ENCODE measurements at regions of chr1 and their contacts with region 1.

Region 1: DNA sequence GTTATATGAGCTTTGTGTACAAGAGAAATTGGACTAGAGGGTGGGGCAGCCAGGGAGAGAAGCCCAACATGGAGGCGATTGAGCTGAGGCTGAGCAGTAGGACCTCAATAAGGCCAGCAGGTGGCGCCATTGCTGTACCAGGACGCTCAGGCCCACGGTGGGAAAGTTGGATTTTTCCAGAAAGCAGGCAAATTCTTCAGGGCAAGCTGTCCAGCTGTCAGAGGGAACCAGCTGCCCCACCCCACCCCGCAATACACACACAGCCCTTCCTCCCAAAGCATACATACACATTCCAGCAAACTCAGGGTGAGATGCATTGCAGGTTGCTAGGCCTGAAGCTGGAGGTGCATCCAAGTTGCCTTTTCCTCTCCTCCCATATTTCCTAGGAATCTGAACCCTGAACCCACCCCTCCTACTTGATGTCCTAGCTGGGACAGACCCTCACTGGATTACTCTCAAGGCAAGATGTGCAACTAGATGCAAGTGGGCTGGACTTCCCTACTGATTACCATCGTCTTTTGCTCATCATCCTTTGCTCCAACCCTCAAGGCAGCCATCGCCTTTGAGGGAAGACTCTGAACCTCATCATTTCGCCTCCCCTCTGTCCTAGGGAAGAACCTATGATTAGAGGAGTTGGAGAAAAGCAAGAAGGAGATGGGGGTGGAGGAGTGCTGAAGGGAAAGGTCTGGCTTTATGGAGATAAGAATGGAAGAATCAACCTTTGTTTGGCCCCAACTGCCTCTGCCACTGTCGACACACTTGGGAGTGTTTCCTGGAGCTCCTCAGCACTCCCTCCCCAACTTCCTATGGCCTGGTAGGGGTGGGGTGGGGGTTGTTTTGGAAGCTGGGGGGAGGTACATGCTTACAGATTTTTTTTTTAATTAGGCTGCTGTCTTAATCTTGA is 25.5 kb downstream of the CD34 start:
- DNase-seq: peak; percentile 79
- ATAC-seq: peak; percentile 95
- H3K4me3 Mint-ChIP-seq: no peak overlapping the region
- H3K27ac Mint-ChIP-seq: no peak overlapping the region
- H3K4me1 Mint-ChIP-seq: peaks cover 7% of the 10 kb centered on the region; the same call in 1 of the 2 replicates
- H3K27me3 Mint-ChIP-seq: peaks cover 8% of the 10 kb centered on the region
- CTCF ChIP-seq: peak; percentile 90

Region 2: GRCh38 chr1:207787776-207788175 is 97.6 kb before region 1 on chr1:
- CTCF ChIA-PET with region 1: no interaction called
- POLR2A ChIA-PET with region 1: no interaction called
- DNase-seq: no peak
- ATAC-seq: no peak
- H3K4me3 Mint-ChIP-seq: no peak overlapping the region
- H3K27ac Mint-ChIP-seq: no peak overlapping the region
- H3K4me1 Mint-ChIP-seq: no peaks in the 10 kb centered on the region
- H3K27me3 Mint-ChIP-seq: no peaks in the 10 kb centered on the region
- CTCF ChIP-seq: no peak

Region 3: GRCh38 chr1:207803678-207804077 is 81.7 kb before region 1 on chr1:
- CTCF ChIA-PET with region 1: no interaction called
- POLR2A ChIA-PET with region 1: no interaction called
- DNase-seq: no peak
- ATAC-seq: no peak
- H3K4me3 Mint-ChIP-seq: no peak overlapping the region
- H3K27ac Mint-ChIP-seq: no peak overlapping the region
- H3K4me1 Mint-ChIP-seq: peaks cover 19% of the 10 kb centered on the region
- H3K27me3 Mint-ChIP-seq: no peaks in the 10 kb centered on the region; the same call in 1 of the 2 replicates
- CTCF ChIP-seq: no peak

Region 4: DNA sequence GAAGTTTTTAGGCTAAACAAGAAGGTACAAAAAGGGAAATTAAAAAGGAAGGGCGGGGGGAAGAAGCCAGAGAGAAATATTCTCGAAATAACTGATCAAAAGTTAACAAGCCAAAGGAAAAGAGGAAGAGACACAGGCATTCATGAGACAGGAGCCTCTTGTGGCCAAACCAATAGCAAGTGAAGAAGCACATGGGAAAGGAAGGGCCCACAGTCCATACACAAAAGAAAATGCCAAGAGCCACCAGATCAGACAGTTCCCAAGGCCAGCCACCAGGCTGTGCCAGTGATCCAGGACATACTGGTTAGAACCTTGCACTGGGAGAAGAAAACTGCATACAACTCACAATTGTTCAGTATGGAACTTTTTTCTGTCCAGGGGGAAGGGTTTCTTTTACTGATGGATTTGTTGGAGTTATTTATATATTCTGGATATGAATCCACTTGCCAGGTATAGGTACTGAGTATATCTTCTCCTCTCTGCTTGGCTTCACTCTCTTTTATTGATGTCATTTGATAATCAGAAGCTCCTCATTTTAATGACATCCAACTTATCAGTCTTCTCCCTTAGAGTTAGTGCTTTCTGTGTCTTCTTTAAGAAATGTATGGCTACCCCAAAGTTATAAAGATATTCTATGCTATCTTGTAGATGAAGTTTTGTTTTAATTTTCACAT is 56.8 kb before region 1 on chr1:
- CTCF ChIA-PET with region 1: interaction called, 16 read pairs
- POLR2A ChIA-PET with region 1: no interaction called
- DNase-seq: peak; percentile 70
- ATAC-seq: peak; percentile 95
- H3K4me3 Mint-ChIP-seq: no peak overlapping the region
- H3K27ac Mint-ChIP-seq: no peak overlapping the region
- H3K4me1 Mint-ChIP-seq: peaks cover 7% of the 10 kb centered on the region
- H3K27me3 Mint-ChIP-seq: no peaks in the 10 kb centered on the region
- CTCF ChIP-seq: peak; percentile 45; the same call in 1 of the 2 replicates

Region 5: GRCh38 chr1:207868774-207869721 is 16.3 kb before region 1 on chr1:
- CTCF ChIA-PET with region 1: interaction called, 64 read pairs
- POLR2A ChIA-PET with region 1: no interaction called
- DNase-seq: peak; percentile 72
- ATAC-seq: peak; percentile 65
- H3K4me3 Mint-ChIP-seq: peak overlapping the region; percentile 71
- H3K27ac Mint-ChIP-seq: no peak overlapping the region
- H3K4me1 Mint-ChIP-seq: peaks cover 18% of the 10 kb centered on the region
- H3K27me3 Mint-ChIP-seq: peaks cover 28% of the 10 kb centered on the region
- CTCF ChIP-seq: peak; percentile 60

Region 6: DNA sequence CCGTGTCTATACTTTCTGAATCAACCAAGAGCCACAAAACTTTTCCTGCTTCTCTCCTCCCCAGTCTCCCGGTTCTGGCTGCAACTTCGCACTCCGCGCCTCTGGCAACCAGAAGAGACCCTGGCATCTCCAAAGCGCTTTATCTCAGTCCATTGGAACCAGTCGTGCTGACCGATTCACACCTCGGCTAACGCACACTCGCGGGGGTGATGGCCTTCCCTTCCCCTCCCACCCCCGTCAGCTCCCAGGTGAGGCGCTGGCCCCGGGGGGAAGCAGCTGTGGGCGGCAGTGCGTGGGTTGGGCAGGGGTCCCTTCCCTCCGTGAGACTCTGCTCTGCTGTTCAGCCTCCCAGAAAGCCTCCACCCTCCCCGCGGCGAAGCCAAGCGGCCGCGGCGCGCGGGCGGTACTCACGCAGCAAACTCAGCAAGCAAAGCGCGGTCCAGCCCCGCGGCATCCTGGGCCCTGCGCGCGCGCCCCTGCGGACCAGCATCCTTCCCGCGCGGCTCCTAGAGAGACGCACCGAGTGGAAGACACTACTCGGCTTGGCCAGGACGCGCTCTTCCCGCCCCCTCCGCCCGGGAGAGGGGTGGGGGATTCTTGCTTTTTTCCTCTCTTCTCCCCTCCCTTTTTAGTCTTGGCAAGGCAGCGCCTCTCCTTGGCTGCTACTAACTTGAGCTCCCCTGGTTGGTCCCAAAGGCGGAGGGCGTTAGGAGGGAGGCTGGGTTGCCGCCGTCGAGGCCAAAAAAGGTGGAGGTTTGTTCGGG is 25.4 kb after region 1 on chr1 and contains the start of gene CD34:
- CTCF ChIA-PET with region 1: interaction called, 16 read pairs
- POLR2A ChIA-PET with region 1: no interaction called
- DNase-seq: peak; percentile 55
- ATAC-seq: peak; percentile 85
- H3K4me3 Mint-ChIP-seq: peak within 1 kb of the TSS; percentile 59
- H3K27ac Mint-ChIP-seq: no peak within 1 kb of the TSS
- H3K4me1 Mint-ChIP-seq: peaks cover 12% of the 10 kb centered on the region
- H3K27me3 Mint-ChIP-seq: peaks cover 52% of the 10 kb centered on the region
- CTCF ChIP-seq: no peak
- total RNA-seq, gene CD34: 0.18 to 0.35 TPM (median 0.27 TPM) in 3 replicates

Region 7: DNA sequence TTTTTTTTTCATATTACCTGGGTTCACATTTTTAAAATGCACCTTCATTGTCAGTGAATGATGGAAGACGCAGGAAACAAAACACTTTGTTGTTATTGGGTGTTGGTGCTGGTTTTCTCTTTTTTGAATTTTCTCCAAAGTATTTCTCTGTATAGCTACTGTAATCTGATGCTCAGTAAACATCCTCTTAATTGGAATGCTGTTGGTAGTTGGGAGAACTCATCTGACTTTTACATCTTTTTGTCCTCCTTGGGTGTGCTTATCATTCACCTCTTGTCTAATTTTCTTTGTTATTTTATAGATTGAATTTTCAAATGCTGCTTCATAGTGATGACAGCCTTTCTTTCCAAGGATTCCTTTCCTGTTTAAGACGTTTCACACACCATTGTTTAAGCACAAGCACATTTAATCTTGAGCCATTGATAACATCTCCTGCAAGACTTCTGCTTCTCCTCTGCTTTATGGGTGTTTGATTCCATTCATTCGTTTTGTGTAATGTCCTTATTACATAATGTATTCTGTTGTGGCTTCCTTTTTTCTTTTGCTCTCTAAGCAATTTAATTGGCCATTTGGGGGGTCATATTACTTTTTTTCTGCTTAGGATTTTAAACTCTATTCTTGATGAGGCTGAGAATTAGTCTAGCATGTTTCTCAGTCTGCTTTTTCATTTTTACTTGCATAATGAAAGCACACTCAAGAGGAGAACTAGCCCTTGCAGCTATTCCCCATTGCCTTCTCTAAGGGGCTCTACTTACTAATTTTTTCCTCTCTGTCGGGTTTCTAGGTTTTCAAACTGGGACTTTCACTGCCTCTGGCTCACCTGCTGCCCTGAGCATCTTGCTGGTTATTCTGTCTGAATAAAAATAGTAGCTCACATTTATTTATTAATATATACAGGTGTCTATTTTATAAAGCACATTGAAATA is 67.5 kb after region 1 on chr1:
- CTCF ChIA-PET with region 1: interaction called, 21 read pairs
- POLR2A ChIA-PET with region 1: no interaction called
- DNase-seq: no peak
- ATAC-seq: no peak
- H3K4me3 Mint-ChIP-seq: no peak overlapping the region
- H3K27ac Mint-ChIP-seq: no peak overlapping the region
- H3K4me1 Mint-ChIP-seq: peaks cover 11% of the 10 kb centered on the region
- H3K27me3 Mint-ChIP-seq: peaks cover 24% of the 10 kb centered on the region
- CTCF ChIP-seq: no peak

Region 8: GRCh38 chr1:207981976-207982375 is 96.6 kb after region 1 on chr1:
- CTCF ChIA-PET with region 1: interaction called, 25 read pairs
- POLR2A ChIA-PET with region 1: no interaction called
- DNase-seq: peak; percentile 58
- ATAC-seq: peak; percentile 100
- H3K4me3 Mint-ChIP-seq: no peak overlapping the region
- H3K27ac Mint-ChIP-seq: no peak overlapping the region
- H3K4me1 Mint-ChIP-seq: no peaks in the 10 kb centered on the region
- H3K27me3 Mint-ChIP-seq: no peaks in the 10 kb centered on the region; the same call in none of the 2 replicates
- CTCF ChIP-seq: peak; percentile 73